Naive thymus-derived CD8-positive, alpha-beta T cell (primary cell): ENCODE measurements at regions of chr3 and their contacts with region 1.

Region 1: DNA sequence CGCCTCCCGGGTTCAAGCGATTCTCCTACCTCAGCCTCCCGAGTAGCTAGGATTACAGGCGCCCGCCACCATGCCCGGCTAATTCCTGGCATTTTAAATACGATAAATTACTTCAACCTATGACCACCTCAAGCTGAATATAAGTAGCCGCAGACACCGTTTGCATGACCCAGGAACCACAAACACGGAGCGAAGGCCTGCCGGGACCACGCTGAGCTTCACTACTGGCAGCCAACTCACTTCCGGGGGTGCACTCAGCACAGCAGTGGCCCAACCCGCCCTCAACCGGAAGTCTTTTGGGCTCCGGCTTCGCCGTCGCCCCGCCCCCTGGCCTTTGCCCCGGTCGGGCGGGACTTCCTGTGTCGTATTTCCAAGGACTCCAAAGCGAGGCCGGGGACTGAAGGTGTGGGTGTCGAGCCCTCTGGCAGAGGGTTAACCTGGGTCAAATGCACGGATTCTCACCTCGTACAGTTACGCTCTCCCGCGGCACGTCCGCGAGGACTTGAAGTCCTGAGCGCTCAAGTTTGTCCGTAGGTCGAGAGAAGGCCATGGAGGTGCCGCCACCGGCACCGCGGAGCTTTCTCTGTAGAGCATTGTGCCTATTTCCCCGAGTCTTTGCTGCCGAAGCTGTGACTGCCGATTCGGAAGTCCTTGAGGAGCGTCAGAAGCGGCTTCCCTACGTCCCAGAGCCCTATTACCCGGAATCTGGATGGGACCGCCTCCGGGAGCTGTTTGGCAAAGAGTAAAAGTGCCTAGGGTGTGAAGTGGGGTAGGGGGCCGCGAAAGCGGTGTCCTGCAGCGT is at the start of gene TIMMDC1:
- DNase-seq: peak; percentile 93 to 98 (median 97)
- ATAC-seq: peak; percentile 97
- H3K4me3 Mint-ChIP-seq: peak within 1 kb of the TSS; percentile 97 to 99 (median 99)
- H3K27ac Mint-ChIP-seq: peak within 1 kb of the TSS; percentile 98 to 100 (median 99)
- H3K4me1 Mint-ChIP-seq: peaks cover 12 to 42% (median 35%) of the 10 kb centered on the region in 4 donors
- H3K27me3 Mint-ChIP-seq: no peaks in the 10 kb centered on the region
- polyA plus RNA-seq, gene TIMMDC1: 63.0 to 89.7 (median 75.0) TPM

Region 2: GRCh38 chr3:119293871-119294695 is 204.3 kb before region 1 on chr3 and contains the start of gene ARHGAP31:
- POLR2A ChIA-PET with region 1: interaction called, 14 read pairs
- DNase-seq: peak; percentile 64 to 94 (median 88)
- ATAC-seq: peak; percentile 70 to 74
- H3K4me3 Mint-ChIP-seq: peak within 1 kb of the TSS; percentile 86 to 97 (median 92)
- H3K27ac Mint-ChIP-seq: peak within 1 kb of the TSS; percentile 86 to 98 (median 98)
- H3K4me1 Mint-ChIP-seq: peaks cover 23 to 65% (median 54%) of the 10 kb centered on the region in 4 donors
- H3K27me3 Mint-ChIP-seq: no peaks in the 10 kb centered on the region
- polyA plus RNA-seq, gene ARHGAP31: 0.32 to 2.3 (median 1.6) TPM

Region 3: DNA sequence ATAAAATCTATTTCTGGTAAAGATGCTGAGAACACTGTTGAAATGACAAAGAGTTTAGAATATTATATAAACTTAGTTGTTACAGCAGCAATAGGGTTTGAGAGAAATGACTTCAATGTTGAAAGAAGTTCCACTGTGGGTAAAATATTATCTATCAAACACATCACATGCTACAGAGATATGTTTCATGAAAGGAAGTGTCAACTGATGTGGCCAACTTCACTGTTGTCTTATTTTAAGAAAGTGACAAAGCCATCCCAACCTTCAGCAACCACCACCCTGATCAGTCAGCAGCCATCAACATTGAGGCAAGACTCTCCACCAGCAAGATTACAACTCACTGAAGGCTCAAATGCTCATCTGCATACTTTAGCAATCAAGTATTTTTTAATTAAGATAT is 55.2 kb before region 1 on chr3:
- POLR2A ChIA-PET with region 1: no interaction called
- DNase-seq: no peak
- ATAC-seq: no peak
- H3K4me3 Mint-ChIP-seq: no peak overlapping the region
- H3K27ac Mint-ChIP-seq: peak overlapping the region in 1 of 10 donors; percentile 60
- H3K4me1 Mint-ChIP-seq: peaks cover 0 to 2% (median under 1%) of the 10 kb centered on the region in 4 donors
- H3K27me3 Mint-ChIP-seq: no peaks in the 10 kb centered on the region

Region 4: GRCh38 chr3:119463171-119464169 is 34.9 kb before region 1 on chr3 and contains the start of gene TMEM39A:
- POLR2A ChIA-PET with region 1: interaction called, 58 read pairs
- DNase-seq: peak; percentile 97 to 100 (median 98)
- ATAC-seq: peak; percentile 88 to 89
- H3K4me3 Mint-ChIP-seq: peak within 1 kb of the TSS; percentile 90 to 96 (median 94)
- H3K27ac Mint-ChIP-seq: peak within 1 kb of the TSS; percentile 97 to 100 (median 99)
- H3K4me1 Mint-ChIP-seq: peaks cover 12 to 47% (median 36%) of the 10 kb centered on the region in 4 donors
- H3K27me3 Mint-ChIP-seq: peaks cover 0 to 4% (median 0%) of the 10 kb centered on the region in 5 donors
- polyA plus RNA-seq, gene TMEM39A: 6.5 to 11.9 (median 10.4) TPM

Region 5: GRCh38 chr3:119469381-119470189 is 28.8 kb before region 1 on chr3:
- POLR2A ChIA-PET with region 1: interaction called, 58 read pairs
- DNase-seq: peak in 5 of 10 donors; percentile 4 to 69 (median 33)
- ATAC-seq: peak; percentile 52
- H3K4me3 Mint-ChIP-seq: peak overlapping the region; percentile 88 to 97 (median 94)
- H3K27ac Mint-ChIP-seq: peak overlapping the region; percentile 74 to 96 (median 94)
- H3K4me1 Mint-ChIP-seq: peaks cover 17 to 36% (median 34%) of the 10 kb centered on the region in 4 donors
- H3K27me3 Mint-ChIP-seq: no peaks in the 10 kb centered on the region

Region 6: DNA sequence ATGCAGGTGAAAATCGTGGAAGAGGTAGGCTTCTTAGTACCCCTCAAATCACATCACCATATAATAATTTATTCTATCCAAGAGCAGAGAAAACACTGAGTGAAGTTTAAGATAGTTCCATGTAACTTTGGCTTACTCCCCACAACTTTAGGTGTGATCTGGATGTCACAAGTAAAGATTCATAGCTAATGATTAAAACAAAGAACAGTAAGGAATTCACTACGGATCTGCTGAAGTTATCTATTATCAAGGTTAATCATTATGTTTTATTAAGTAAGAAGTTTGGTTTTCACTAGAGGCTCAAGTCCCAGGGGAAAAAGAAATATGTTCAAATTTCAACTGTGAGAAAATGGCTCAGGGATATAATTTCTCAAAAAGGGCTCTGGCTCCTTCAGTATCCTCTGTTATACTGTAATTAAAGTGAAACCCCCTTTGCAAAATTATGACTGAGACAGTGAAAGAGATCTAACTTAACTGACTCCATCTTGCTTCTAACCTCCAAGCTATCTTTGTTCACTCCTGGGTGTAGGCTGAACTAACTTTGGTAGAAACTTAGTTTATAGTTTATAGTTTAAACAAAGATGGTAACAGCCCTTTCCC is 43.9 kb after region 1 on chr3:
- POLR2A ChIA-PET with region 1: no interaction called
- DNase-seq: no peak
- ATAC-seq: no peak
- H3K4me3 Mint-ChIP-seq: no peak overlapping the region
- H3K27ac Mint-ChIP-seq: no peak overlapping the region
- H3K4me1 Mint-ChIP-seq: peaks cover 0 to 5% (median 0%) of the 10 kb centered on the region in 4 donors
- H3K27me3 Mint-ChIP-seq: peaks cover 0 to 2% (median 0%) of the 10 kb centered on the region in 5 donors

Region 7: GRCh38 chr3:119618905-119619493 is 120.6 kb after region 1 on chr3:
- POLR2A ChIA-PET with region 1: no interaction called
- DNase-seq: no peak
- ATAC-seq: no peak
- H3K4me3 Mint-ChIP-seq: no peak overlapping the region
- H3K27ac Mint-ChIP-seq: no peak overlapping the region
- H3K4me1 Mint-ChIP-seq: no peaks in the 10 kb centered on the region
- H3K27me3 Mint-ChIP-seq: peaks cover 0 to 13% (median 2%) of the 10 kb centered on the region in 5 donors

Region 8: GRCh38 chr3:119652306-119653033 is 154.1 kb after region 1 on chr3:
- POLR2A ChIA-PET with region 1: no interaction called
- DNase-seq: no peak
- ATAC-seq: no peak
- H3K4me3 Mint-ChIP-seq: no peak overlapping the region
- H3K27ac Mint-ChIP-seq: no peak overlapping the region
- H3K4me1 Mint-ChIP-seq: peaks cover 2 to 6% (median 6%) of the 10 kb centered on the region in 4 donors
- H3K27me3 Mint-ChIP-seq: no peaks in the 10 kb centered on the region

Region 9: GRCh38 chr3:119676771-119677640 is 178.6 kb after region 1 on chr3 and contains the start of gene COX17:
- POLR2A ChIA-PET with region 1: interaction called, 13 read pairs
- DNase-seq: peak; percentile 88 to 98 (median 96)
- ATAC-seq: peak; percentile 92 to 94
- H3K4me3 Mint-ChIP-seq: peak within 1 kb of the TSS; percentile 83 to 96 (median 92)
- H3K27ac Mint-ChIP-seq: peak within 1 kb of the TSS; percentile 96 to 99 (median 97)
- H3K4me1 Mint-ChIP-seq: peaks cover 19 to 39% (median 37%) of the 10 kb centered on the region in 4 donors
- H3K27me3 Mint-ChIP-seq: no peaks in the 10 kb centered on the region
- polyA plus RNA-seq, gene COX17: 53.2 to 57.6 (median 56.4) TPM

Region 10: GRCh38 chr3:120095226-120095978 is 597.0 kb after region 1 on chr3:
- POLR2A ChIA-PET with region 1: interaction called, 16 read pairs
- DNase-seq: peak; percentile 76 to 92 (median 85)
- ATAC-seq: peak; percentile 30 to 37
- H3K4me3 Mint-ChIP-seq: no peak overlapping the region
- H3K27ac Mint-ChIP-seq: peak overlapping the region in 2 of 10 donors; percentile 96 to 98
- H3K4me1 Mint-ChIP-seq: peaks cover 13 to 31% (median 25%) of the 10 kb centered on the region in 4 donors
- H3K27me3 Mint-ChIP-seq: peaks cover 0 to 5% (median 0%) of the 10 kb centered on the region in 5 donors